ENCODE measurements at regions of chr9 and their contacts with region 1.

Region 1: GRCh38 chr9:72364679-72365524 is at the start of gene ZFAND5:
- DNase-seq: peak; percentile 97
- H3K4me3 ChIP-seq: peak within 1 kb of the TSS; percentile 67
- H3K27ac ChIP-seq: peak within 1 kb of the TSS; percentile 100
- H3K27me3 ChIP-seq: no peaks in the 10 kb centered on the region
- CTCF ChIP-seq: no peak
- polyA plus RNA-seq, gene ZFAND5: 195 and 224 TPM in 2 replicates

Region 2: GRCh38 chr9:72280913-72281500 is 83.9 kb before region 1 on chr9:
- CTCF ChIA-PET with region 1: interaction called, 10 read pairs
- POLR2A ChIA-PET with region 1: interaction called, 3 read pairs
- DNase-seq: no peak
- H3K4me3 ChIP-seq: no peak overlapping the region
- H3K27ac ChIP-seq: no peak overlapping the region
- H3K27me3 ChIP-seq: peaks cover 8% of the 10 kb centered on the region
- CTCF ChIP-seq: peak; percentile 99

Region 3: DNA sequence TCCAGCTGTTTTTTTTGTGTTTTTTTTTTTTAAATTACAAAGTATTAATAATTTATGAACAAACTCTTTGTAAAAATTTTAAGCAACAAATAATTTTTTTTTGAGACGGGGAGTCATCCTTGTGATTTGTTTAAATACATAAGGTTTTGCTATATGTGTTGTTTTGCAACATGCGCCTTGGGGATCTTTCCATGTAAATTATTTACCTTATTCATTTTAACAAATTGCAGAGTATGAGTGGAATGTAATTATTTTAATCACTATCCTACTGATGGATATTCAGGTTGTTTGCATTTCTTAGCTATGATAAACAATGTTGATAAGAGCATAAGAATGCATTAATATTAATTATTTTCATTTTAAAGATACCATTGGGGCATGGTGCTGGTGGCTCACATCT is 14.2 kb after region 1 on chr9:
- CTCF ChIA-PET with region 1: interaction called, 8 read pairs
- POLR2A ChIA-PET with region 1: interaction called, 32 read pairs
- DNase-seq: no peak
- H3K4me3 ChIP-seq: no peak overlapping the region
- H3K27ac ChIP-seq: no peak overlapping the region
- H3K27me3 ChIP-seq: no peaks in the 10 kb centered on the region
- CTCF ChIP-seq: no peak

Region 4: GRCh38 chr9:72396247-72397091 is 31.6 kb after region 1 on chr9:
- CTCF ChIA-PET with region 1: interaction called, 3 read pairs
- POLR2A ChIA-PET with region 1: interaction called, 15 read pairs
- DNase-seq: peak; percentile 74
- H3K4me3 ChIP-seq: no peak overlapping the region
- H3K27ac ChIP-seq: no peak overlapping the region
- H3K27me3 ChIP-seq: no peaks in the 10 kb centered on the region
- CTCF ChIP-seq: no peak

Region 5: GRCh38 chr9:72473474-72474261 is 108.8 kb after region 1 on chr9:
- CTCF ChIA-PET with region 1: no interaction called
- POLR2A ChIA-PET with region 1: interaction called, 14 read pairs
- DNase-seq: no peak
- H3K4me3 ChIP-seq: no peak overlapping the region
- H3K27ac ChIP-seq: peak overlapping the region; percentile 80
- H3K27me3 ChIP-seq: no peaks in the 10 kb centered on the region
- CTCF ChIP-seq: no peak

Region 6: DNA sequence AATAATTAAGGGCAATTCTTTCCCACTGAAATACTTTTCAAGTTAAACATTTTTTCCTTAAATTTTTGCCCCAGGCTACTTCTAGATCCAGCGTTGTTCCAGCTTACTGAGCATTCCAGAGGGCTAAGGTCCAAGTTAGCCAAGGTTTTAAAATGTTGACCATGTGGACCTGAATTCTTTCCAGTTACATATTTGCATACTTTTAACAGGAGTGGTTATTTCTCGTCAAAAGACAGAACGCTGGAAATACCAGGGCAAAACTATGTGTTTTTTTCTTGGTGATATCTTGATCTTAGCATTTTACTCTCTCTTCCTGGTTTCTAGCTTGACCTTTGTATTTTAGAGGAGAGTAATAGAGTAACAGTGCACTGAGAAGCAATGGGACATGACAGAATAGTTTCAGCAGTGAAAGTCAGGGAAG is 189.3 kb after region 1 on chr9:
- CTCF ChIA-PET with region 1: no interaction called
- POLR2A ChIA-PET with region 1: interaction called, 21 read pairs
- DNase-seq: peak; percentile 74
- H3K4me3 ChIP-seq: no peak overlapping the region
- H3K27ac ChIP-seq: no peak overlapping the region
- H3K27me3 ChIP-seq: no peaks in the 10 kb centered on the region
- CTCF ChIP-seq: no peak

Region 7: DNA sequence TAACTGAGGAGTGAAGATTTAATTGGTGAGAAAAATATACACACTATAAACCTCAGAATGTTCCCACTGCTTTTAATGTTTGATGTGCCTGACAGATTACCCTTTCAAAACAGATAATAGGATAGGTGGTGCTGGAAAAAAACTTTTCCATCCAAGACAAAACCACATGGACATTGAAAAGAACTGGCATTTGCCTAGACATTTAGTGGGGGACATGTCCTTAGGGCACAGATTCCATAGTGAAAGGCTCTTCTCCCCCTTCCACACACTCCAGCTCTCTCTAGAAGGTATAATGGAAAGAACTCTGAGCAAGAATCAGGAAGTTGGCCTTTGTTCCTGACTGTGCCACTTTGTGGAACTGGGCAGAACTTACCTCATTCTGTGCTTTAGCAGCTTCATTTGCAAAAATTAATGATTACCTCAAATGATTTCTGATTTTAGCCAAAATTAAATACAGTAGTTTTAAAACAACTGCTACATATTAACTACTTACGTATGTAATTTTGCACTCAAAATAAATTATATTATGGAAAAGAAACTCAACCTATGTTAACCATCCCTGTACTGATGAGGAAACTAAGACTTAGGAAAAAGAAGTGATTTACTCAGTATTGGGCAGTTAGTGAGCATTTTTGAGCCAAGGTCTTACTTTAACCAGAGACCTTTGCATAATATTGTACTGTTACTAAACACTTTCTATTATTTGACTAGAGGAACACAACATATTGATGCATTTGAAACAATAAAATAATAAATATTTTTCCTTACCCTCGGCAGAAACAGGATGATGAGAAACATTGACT is 199.8 kb after region 1 on chr9:
- CTCF ChIA-PET with region 1: no interaction called
- POLR2A ChIA-PET with region 1: no interaction called
- DNase-seq: no peak
- H3K4me3 ChIP-seq: no peak overlapping the region
- H3K27ac ChIP-seq: no peak overlapping the region
- H3K27me3 ChIP-seq: no peaks in the 10 kb centered on the region
- CTCF ChIP-seq: no peak

Region 8: GRCh38 chr9:72586388-72587130 is 221.7 kb after region 1 on chr9:
- CTCF ChIA-PET with region 1: interaction called, 23 read pairs
- POLR2A ChIA-PET with region 1: interaction called, 29 read pairs
- DNase-seq: peak; percentile 37
- H3K4me3 ChIP-seq: no peak overlapping the region
- H3K27ac ChIP-seq: peak overlapping the region; percentile 83
- H3K27me3 ChIP-seq: no peaks in the 10 kb centered on the region
- CTCF ChIP-seq: peak; percentile 22; the same call in 1 of the 2 replicates